CD4-positive, alpha-beta memory T cell (primary cell): ENCODE measurements at regions of chr16 and their contacts with region 1.

Region 1: DNA sequence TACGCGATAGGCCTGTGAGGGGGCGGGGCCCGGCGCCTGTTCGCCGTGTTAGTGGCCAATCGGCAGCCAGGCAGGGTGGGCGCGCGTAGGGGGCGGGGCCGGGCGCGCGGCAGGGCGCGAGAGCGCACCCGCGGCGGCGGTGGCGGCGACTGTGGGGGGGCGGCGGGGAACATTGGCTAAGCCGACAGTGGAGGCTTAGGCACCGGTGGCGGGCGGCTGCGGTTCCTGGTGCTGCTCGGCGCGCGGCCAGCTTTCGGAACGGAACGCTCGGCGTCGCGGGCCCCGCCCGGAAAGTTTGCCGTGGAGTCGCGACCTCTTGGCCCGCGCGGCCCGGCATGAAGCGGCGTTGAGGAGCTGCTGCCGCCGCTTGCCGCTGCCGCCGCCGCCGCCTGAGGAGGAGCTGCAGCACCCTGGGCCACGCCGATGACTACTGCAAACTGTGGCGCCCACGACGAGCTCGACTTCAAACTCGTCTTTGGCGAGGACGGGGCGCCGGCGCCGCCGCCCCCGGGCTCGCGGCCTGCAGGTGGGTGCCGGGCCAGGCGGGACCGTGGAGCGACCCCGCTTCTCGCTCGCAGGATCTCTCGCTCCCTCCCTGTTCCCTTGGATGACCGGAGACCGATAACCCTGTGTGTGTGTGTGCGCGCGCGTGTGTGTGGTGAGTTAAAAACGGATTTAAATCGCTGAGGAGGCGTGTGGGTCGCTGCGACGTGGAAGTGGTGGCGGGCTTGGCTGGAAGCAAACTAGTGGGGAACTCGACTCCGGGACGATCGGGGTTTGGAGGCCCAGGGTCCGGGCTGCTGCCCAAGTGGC is at the start of gene NFATC3:
- DNase-seq: peak; percentile 98 to 99 (median 98)
- H3K4me3 ChIP-seq: peak within 1 kb of the TSS; percentile 79 to 92
- H3K4me3 Mint-ChIP-seq: peak within 1 kb of the TSS; percentile 90 to 99 (median 94)
- H3K27ac ChIP-seq: peak within 1 kb of the TSS; percentile 89
- H3K27ac Mint-ChIP-seq: peak within 1 kb of the TSS; percentile 86 to 97 (median 92)
- H3K4me1 ChIP-seq: peaks cover 78% of the 10 kb centered on the region
- H3K4me1 Mint-ChIP-seq: peaks cover 53 to 80% (median 63%) of the 10 kb centered on the region in 4 donors
- H3K27me3 ChIP-seq: no peaks in the 10 kb centered on the region
- H3K27me3 Mint-ChIP-seq: no peaks in the 10 kb centered on the region
- total RNA-seq, gene NFATC3: 127 to 134 TPM

Region 2: DNA sequence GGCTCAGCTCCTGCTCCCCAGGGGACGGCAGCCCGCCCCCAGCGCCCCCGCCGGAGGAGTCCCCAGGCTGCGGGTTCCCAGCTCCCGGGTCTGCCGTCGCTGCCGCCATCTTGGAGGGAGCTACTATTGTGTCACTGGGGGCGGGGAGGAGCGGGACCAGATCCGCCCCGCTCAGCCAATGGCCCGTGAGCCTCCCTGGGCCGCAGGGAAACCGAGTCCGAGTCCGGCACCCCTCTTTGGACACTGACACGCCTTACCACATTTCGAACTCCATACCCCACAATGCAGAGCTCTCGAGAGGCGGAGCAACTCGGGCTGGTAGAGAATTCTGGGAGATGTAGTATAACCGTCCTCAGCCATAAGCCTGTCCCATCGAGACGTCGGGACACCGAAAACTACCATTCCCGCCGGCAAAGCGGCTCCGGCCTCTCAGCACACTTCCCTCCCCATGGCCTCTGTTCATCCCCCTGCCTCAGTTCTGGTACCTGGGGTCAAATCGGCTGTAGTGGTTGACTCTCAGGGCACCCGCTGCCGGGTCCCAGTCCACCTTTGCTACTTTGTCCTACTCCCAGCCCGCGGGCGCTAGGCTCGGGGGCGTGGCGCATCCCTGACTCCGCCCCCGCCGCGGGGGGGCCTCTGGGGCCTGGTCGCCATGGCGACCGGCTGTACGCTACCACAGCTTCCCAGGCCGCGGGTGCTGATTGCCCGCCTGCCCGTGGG is 278.9 kb before region 1 on chr16 and contains the starts of genes RANBP10 and TSNAXIP1:
- CTCF ChIA-PET with region 1: no interaction called
- POLR2A ChIA-PET with region 1: interaction called, 8 read pairs
- intact Hi-C with region 1: loop called (anchors 1 kb)
- DNase-seq: peak; percentile 97 to 99 (median 99)
- H3K4me3 ChIP-seq: peak within 1 kb of the TSS; percentile 91 to 93
- H3K4me3 Mint-ChIP-seq: peak within 1 kb of the TSS; percentile 88 to 95 (median 90)
- H3K27ac ChIP-seq: peak within 1 kb of the TSS; percentile 95
- H3K27ac Mint-ChIP-seq: peak within 1 kb of the TSS; percentile 85 to 98 (median 95)
- H3K4me1 ChIP-seq: peaks cover 43% of the 10 kb centered on the region
- H3K4me1 Mint-ChIP-seq: peaks cover 26 to 52% (median 36%) of the 10 kb centered on the region in 4 donors
- H3K27me3 ChIP-seq: no peaks in the 10 kb centered on the region
- H3K27me3 Mint-ChIP-seq: no peaks in the 10 kb centered on the region
- total RNA-seq, gene RANBP10: 25.6 to 27.8 TPM
- total RNA-seq, gene TSNAXIP1: 0.44 to 0.64 TPM

Region 3: GRCh38 chr16:68005786-68006286 is 79.6 kb before region 1 on chr16:
- CTCF ChIA-PET with region 1: interaction called, 4 read pairs
- POLR2A ChIA-PET with region 1: interaction called, 30 read pairs
- intact Hi-C with region 1: no loop called
- DNase-seq: peak; percentile 61 to 77 (median 67)
- H3K4me3 ChIP-seq: no peak overlapping the region
- H3K4me3 Mint-ChIP-seq: peak overlapping the region in 7 of 8 donors; percentile 46 to 76 (median 60)
- H3K27ac ChIP-seq: peak overlapping the region; percentile 29
- H3K27ac Mint-ChIP-seq: peak overlapping the region; percentile 81 to 97 (median 95)
- H3K4me1 ChIP-seq: peaks cover 56% of the 10 kb centered on the region
- H3K4me1 Mint-ChIP-seq: peaks cover 22 to 53% (median 37%) of the 10 kb centered on the region in 4 donors
- H3K27me3 ChIP-seq: no peaks in the 10 kb centered on the region
- H3K27me3 Mint-ChIP-seq: no peaks in the 10 kb centered on the region

Region 4: DNA sequence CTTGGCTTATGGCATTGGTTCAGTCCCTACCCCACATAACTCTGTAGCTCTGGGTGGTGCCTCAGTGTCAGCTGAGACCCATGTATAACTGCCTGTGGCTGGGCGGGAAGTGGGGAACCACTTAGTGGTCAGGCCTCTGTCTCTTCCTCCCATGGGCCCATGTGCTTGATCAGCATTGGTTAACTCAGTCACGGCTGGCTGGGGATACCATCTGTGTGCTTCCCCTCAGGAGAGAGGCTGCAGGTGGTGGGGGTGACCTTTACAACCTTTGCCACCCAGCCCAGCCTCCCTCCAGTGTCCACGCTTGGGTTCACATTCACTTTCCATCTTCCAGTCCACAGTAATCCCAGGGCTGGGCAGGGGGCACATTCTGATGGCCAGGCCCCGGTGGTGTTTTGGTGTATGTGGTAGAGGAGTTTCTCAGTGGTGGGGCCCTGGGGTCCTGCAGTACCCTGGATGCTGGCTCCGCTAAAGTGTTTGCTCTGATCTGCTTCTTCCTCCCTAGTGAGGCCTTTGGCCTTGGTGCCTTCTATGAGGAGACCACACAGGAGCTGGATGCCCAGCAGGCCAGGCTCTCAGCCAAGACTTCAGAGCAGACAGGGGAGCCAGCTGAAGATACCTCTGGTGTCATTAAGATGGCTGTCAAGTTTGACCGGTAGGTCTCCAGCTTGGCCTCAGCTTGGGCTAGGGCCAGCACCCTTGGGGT is 10.5 kb before region 1 on chr16:
- CTCF ChIA-PET with region 1: interaction called, 83 read pairs
- POLR2A ChIA-PET with region 1: interaction called, 474 read pairs
- intact Hi-C with region 1: loop called (anchors 1 kb)
- DNase-seq: peak; percentile 63 to 82 (median 71)
- H3K4me3 ChIP-seq: peak overlapping the region in 1 of 2 donors; percentile 1
- H3K4me3 Mint-ChIP-seq: peak overlapping the region; percentile 26 to 89 (median 84)
- H3K27ac ChIP-seq: peak overlapping the region; percentile 40
- H3K27ac Mint-ChIP-seq: peak overlapping the region; percentile 66 to 95 (median 91)
- H3K4me1 ChIP-seq: peaks cover 94% of the 10 kb centered on the region
- H3K4me1 Mint-ChIP-seq: peaks cover 70 to 92% (median 84%) of the 10 kb centered on the region in 4 donors
- H3K27me3 ChIP-seq: no peaks in the 10 kb centered on the region
- H3K27me3 Mint-ChIP-seq: no peaks in the 10 kb centered on the region

Region 5: DNA sequence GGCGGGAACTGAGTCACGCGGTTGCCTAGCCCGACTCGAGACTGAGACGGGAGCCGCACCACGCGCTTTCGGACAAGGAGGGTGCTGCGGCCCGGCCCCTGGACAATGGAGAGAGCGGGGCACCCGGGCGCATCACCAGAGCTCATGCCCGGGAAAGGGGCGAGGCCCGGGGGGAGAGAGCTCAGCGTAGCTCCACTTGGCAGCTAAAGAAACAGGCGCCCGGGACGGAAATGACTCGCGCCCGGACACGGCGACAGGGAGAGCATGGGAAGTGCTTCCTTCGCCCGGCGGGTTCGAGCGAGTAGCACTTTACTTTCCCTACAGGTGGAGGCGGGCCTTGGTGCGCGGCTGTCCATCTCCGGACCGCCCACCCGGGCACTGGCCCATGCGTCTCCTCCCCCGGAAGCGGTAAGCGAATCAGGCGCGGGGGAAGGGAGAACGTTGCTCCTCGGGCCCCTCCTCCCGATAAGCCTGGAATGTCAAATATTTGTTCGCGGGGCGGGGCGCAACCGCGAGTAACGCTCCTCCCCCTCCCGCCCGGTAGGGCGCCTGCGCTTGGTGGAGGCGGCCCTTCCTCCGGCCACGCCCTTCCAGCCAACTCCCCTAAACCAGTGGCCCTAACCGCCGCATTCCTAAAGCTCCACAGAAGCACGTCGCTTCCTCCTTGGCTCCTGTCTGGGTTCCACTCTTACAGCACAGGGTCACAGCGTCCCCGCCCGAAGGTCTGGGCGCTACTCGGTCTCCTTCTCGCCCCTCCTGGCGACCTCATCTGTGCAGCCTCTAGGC is 152.0 kb after region 1 on chr16:
- CTCF ChIA-PET with region 1: interaction called, 3 read pairs
- POLR2A ChIA-PET with region 1: interaction called, 14 read pairs
- intact Hi-C with region 1: no loop called
- DNase-seq: peak; percentile 83 to 90 (median 84)
- H3K4me3 ChIP-seq: peak overlapping the region; percentile 42 to 70
- H3K4me3 Mint-ChIP-seq: peak overlapping the region; percentile 88 to 98 (median 95)
- H3K27ac ChIP-seq: peak overlapping the region; percentile 44
- H3K27ac Mint-ChIP-seq: peak overlapping the region; percentile 90 to 97 (median 94)
- H3K4me1 ChIP-seq: peaks cover 30% of the 10 kb centered on the region
- H3K4me1 Mint-ChIP-seq: peaks cover 16 to 52% (median 34%) of the 10 kb centered on the region in 4 donors
- H3K27me3 ChIP-seq: no peaks in the 10 kb centered on the region
- H3K27me3 Mint-ChIP-seq: no peaks in the 10 kb centered on the region

Region 6: GRCh38 chr16:68367030-68367429 is 281.6 kb after region 1 on chr16:
- CTCF ChIA-PET with region 1: no interaction called
- POLR2A ChIA-PET with region 1: no interaction called
- intact Hi-C with region 1: no loop called
- DNase-seq: peak; percentile 30 to 42 (median 34)
- H3K4me3 ChIP-seq: no peak overlapping the region
- H3K4me3 Mint-ChIP-seq: peak overlapping the region in 3 of 8 donors; percentile 7 to 39 (median 20)
- H3K27ac ChIP-seq: no peak overlapping the region
- H3K27ac Mint-ChIP-seq: peak overlapping the region in 1 of 7 donors; percentile 52
- H3K4me1 ChIP-seq: peaks cover 57% of the 10 kb centered on the region
- H3K4me1 Mint-ChIP-seq: peaks cover 21 to 64% (median 45%) of the 10 kb centered on the region in 4 donors
- H3K27me3 ChIP-seq: no peaks in the 10 kb centered on the region
- H3K27me3 Mint-ChIP-seq: no peaks in the 10 kb centered on the region

Region 7: GRCh38 chr16:68460067-68460466 is 374.6 kb after region 1 on chr16:
- CTCF ChIA-PET with region 1: no interaction called
- POLR2A ChIA-PET with region 1: no interaction called
- intact Hi-C with region 1: no loop called
- DNase-seq: no peak
- H3K4me3 ChIP-seq: no peak overlapping the region
- H3K4me3 Mint-ChIP-seq: no peak overlapping the region
- H3K27ac ChIP-seq: no peak overlapping the region
- H3K27ac Mint-ChIP-seq: no peak overlapping the region
- H3K4me1 ChIP-seq: no peaks in the 10 kb centered on the region
- H3K4me1 Mint-ChIP-seq: peaks cover 0 to 1% (median 0%) of the 10 kb centered on the region in 4 donors
- H3K27me3 ChIP-seq: no peaks in the 10 kb centered on the region
- H3K27me3 Mint-ChIP-seq: peaks cover 5 to 6% of the 10 kb centered on the region in 2 donors

Region 8: DNA sequence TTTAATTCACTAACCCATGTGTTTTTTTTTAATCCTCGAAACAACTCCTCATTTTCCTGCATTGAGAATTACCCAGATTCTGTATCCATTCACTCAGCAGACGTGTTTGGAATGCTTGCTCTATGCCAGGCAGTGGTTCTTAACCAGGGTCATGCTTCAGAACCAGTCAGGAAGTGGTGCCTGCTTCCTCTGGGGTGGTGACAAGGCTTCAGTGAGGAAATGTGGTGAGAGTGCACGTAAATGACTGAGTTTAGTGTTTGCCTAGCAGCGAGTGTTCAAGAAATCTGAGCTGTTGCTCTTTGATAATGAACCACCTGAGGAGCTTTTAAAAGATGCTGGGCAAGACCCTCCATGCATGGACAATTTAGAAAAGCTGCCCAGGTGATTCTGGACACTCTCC is 463.5 kb after region 1 on chr16:
- CTCF ChIA-PET with region 1: no interaction called
- POLR2A ChIA-PET with region 1: no interaction called
- intact Hi-C with region 1: no loop called
- DNase-seq: peak; percentile 42 to 69 (median 63)
- H3K4me3 ChIP-seq: no peak overlapping the region
- H3K4me3 Mint-ChIP-seq: peak overlapping the region in 6 of 8 donors; percentile 36 to 68 (median 56)
- H3K27ac ChIP-seq: no peak overlapping the region
- H3K27ac Mint-ChIP-seq: peak overlapping the region; percentile 70 to 97 (median 80)
- H3K4me1 ChIP-seq: peaks cover 14% of the 10 kb centered on the region
- H3K4me1 Mint-ChIP-seq: peaks cover 11 to 29% (median 18%) of the 10 kb centered on the region in 4 donors
- H3K27me3 ChIP-seq: no peaks in the 10 kb centered on the region
- H3K27me3 Mint-ChIP-seq: no peaks in the 10 kb centered on the region